Activated naive CD8-positive, alpha-beta T cell treated with anti-CD3 and anti-CD28 coated beads, Interleukin-2, amount 10 ng/mL, durations not matched to agents 7 days and 5 days (primary cell): ENCODE measurements at regions of chr1 and their contacts with region 1.

Region 1: DNA sequence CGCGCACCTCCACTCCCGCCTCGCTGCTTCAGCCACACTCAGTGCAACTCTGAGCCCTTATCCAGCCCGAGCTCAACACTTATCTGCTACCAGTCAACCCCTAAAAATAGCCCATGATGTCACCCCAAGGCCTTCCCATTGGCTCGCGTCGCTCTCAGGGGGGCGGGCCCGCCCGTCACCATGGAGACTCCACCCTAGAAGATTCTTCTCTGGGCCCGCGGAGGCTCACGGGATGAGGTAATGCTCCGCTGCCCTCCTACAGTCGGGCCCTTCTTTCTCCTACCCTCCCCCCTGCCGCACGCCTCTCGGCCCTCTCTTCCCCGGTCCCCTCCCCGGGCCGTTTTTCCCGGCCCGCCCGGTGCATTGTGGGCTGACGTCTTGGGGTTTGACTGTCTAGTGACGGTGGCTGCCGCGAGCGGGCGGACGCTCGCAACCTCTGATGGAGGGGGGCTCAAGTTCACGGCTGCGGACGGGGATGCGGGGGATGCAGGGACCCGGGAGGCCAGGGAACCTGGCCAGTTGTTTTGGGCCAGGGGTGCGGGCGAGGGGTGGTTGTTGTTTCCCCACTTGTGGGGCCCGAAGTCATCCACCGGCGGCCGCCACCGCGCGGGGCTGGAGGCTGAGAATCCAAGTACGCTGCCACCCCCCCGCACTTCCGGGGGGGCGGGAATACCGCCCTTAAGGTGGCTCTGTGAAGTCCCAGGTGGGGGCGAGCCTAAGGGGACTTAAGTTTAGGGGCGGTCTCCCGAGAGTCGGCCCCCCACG is at the start of gene JUN:
- DNase-seq: peak; percentile 93
- ATAC-seq: peak; percentile 77
- H3K4me3 Mint-ChIP-seq: peak within 1 kb of the TSS; percentile 93
- H3K27ac Mint-ChIP-seq: peak within 1 kb of the TSS; percentile 99
- H3K4me1 Mint-ChIP-seq: peaks cover 18% of the 10 kb centered on the region
- H3K27me3 Mint-ChIP-seq: no peaks in the 10 kb centered on the region
- total RNA-seq, gene JUN: 73.4 to 75.7 TPM

Region 2: DNA sequence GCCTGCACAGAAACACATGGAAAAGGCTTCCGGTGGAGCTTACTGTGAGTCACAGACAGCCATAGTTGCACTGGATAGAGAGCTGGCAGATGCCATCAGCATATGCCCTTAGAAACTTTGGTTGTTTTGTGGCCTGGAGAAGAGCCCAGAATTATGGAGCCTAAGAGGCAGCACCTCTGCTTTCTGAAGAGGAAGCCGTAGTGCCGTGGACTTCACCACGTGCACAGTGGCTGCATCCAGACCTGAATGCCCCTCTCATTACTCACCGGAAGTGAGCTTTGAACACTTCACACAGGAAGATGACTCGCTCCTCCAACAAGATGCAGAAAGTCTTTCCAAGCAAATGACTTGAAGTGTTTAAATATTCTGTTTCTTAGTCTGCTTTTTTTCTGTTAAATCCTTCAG is 28.7 kb before region 1 on chr1:
- POLR2A ChIA-PET with region 1: interaction called, 30 read pairs
- DNase-seq: peak; percentile 59
- ATAC-seq: peak; percentile 80
- H3K4me3 Mint-ChIP-seq: peak overlapping the region; percentile 67
- H3K27ac Mint-ChIP-seq: peak overlapping the region; percentile 93
- H3K4me1 Mint-ChIP-seq: peaks cover 50% of the 10 kb centered on the region
- H3K27me3 Mint-ChIP-seq: no peaks in the 10 kb centered on the region

Region 3: DNA sequence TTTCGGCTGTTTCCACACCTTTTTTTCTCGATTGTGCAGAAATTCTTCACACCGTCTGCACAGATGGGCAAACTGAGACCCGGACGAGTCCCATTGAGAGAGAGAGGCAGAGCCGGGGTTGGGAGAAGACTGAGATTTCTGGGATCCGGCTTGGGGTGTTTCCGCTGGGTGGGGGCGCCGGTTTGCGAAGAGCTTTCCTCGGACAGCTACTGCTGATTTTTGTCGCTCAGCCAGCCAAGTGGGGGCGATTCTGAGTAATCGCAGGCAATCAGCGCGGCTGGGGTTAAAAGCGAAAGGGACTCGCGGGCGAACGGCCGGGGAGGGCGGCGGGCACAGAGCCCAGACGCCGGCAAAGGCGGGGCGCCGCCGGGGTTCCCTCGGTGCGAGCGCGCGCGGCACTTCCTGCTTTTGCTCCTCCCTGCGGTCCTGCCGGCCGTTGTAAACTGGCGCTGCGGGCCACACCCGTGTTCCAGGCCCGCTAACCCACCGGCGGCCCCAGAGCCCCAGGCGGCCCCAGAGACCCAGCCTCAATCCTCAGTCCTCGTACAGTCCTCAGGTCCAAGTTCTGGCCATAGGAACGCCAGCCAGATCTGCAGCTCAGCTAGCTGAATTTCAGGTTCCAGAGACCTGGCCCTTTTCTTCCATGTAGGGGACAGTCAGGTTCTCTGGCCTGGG is 32.0 kb after region 1 on chr1:
- POLR2A ChIA-PET with region 1: interaction called, 15 read pairs
- DNase-seq: peak; percentile 90
- ATAC-seq: peak; percentile 95
- H3K4me3 Mint-ChIP-seq: peak overlapping the region; percentile 84
- H3K27ac Mint-ChIP-seq: peak overlapping the region; percentile 84
- H3K4me1 Mint-ChIP-seq: peaks cover 30% of the 10 kb centered on the region
- H3K27me3 Mint-ChIP-seq: peaks cover 8% of the 10 kb centered on the region

Region 4: DNA sequence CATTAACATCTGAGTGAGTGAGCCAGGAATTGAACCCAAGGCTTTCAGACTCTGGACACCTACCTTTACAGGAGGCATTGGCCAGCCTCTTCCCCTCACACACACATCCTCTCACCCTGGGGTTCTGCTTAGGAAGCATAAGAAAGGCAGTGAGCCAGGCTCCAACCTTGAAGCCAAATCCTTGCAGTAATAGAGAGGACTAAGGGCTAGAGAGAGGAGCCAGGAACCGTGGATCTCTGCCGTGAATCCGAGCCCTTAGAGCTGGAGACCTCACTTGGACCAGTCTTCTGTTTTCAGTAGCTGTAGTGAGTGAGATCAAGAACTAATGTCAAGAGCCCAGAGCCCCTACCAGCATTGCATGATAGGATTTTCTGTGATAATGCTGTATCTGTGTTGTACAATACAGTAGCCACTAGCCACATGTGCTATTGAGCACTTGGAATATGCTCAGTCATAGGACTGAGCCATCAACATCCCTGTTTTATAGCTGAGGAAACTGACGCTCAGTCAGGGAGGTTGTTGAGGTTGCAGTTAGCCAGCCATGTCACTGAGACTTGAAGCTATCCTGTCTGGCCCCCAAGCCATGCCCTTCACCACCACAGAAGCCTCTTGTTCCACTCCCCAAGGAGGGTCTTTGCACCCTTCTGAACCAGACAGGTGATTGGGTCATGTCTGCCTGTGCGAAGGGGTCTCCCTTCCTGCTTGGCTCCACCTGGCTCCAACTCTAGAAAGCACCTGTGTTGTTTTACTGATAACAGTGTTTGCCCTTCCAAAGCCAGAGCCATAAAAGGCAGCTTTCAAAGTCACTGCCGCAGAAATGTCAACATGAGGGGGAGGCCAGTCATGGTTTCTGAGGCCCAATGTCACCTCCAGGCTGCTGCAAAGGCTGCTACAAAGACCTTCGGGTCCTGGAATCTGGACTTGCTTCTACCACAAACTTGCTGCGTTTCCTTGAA is 100.8 kb after region 1 on chr1:
- POLR2A ChIA-PET with region 1: interaction called, 10 read pairs
- DNase-seq: peak; percentile 43
- ATAC-seq: peak; percentile 27
- H3K4me3 Mint-ChIP-seq: peak overlapping the region; percentile 63
- H3K27ac Mint-ChIP-seq: peak overlapping the region; percentile 80
- H3K4me1 Mint-ChIP-seq: peaks cover 37% of the 10 kb centered on the region
- H3K27me3 Mint-ChIP-seq: no peaks in the 10 kb centered on the region

Region 5: GRCh38 chr1:58941471-58942289 is 157.5 kb after region 1 on chr1:
- POLR2A ChIA-PET with region 1: interaction called, 30 read pairs
- DNase-seq: peak; percentile 55
- ATAC-seq: peak; percentile 84
- H3K4me3 Mint-ChIP-seq: peak overlapping the region; percentile 74
- H3K27ac Mint-ChIP-seq: peak overlapping the region; percentile 82
- H3K4me1 Mint-ChIP-seq: peaks cover 57% of the 10 kb centered on the region
- H3K27me3 Mint-ChIP-seq: peaks cover 3% of the 10 kb centered on the region

Region 6: GRCh38 chr1:59020151-59020997 is 236.2 kb after region 1 on chr1:
- POLR2A ChIA-PET with region 1: interaction called, 12 read pairs
- DNase-seq: peak; percentile 39
- ATAC-seq: peak; percentile 97
- H3K4me3 Mint-ChIP-seq: peak overlapping the region; percentile 65
- H3K27ac Mint-ChIP-seq: peak overlapping the region; percentile 91
- H3K4me1 Mint-ChIP-seq: peaks cover 21% of the 10 kb centered on the region
- H3K27me3 Mint-ChIP-seq: no peaks in the 10 kb centered on the region

Region 7: DNA sequence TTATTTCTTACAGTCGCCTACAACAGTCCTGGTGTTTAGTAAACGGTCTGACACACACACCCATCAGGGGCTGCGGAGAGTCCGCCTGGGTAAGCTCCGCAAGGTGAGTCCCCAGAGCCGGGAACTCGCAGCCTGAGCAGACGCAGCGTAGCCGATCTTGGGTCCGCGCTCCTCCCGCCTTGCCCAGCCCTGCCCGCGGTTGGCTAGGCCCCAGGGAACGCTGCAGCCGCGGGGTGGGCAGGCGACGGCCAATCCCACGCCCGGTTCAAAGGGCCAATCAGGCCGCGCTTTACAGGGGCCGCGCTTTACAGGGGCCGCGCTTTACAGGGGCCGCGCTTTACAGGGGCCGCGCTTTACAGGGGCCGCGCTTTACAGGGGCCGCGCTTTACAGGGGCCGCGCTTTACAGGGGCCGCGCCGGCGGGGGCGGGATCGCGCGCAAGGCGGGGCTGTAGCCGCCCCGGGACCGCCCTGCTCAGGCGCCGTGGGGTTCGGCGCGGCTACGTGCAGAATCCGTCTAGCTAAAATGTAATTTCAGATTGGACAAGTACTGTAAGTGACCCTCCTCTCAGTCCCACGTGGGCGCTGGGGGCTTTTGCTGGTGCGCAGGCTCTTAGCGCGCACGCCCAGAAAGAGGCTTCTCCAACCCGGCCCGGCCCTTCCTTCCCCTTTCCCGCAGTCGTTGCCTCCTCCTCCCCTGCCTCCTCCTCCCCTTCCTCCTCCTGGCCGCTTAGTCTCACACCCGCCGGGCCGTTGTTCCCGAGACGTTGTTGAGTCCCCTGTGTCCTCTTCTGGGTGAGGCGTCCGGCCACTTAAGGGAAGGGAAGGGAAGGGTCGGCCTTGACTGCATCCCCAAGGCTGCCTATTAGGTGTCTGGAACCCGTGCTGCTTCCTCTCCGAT is 512.4 kb after region 1 on chr1 and contains the start of gene FGGY:
- POLR2A ChIA-PET with region 1: interaction called, 29 read pairs
- DNase-seq: peak; percentile 91
- ATAC-seq: peak; percentile 96
- H3K4me3 Mint-ChIP-seq: peak within 1 kb of the TSS; percentile 88
- H3K27ac Mint-ChIP-seq: peak within 1 kb of the TSS; percentile 89
- H3K4me1 Mint-ChIP-seq: peaks cover 20% of the 10 kb centered on the region
- H3K27me3 Mint-ChIP-seq: no peaks in the 10 kb centered on the region
- total RNA-seq, gene FGGY: 10.1 to 11.7 TPM